Activated B cell treated with CpG ODN at 0.5 μM for 24 hours (primary cell): ENCODE measurements at regions of chr7 and their contacts with region 1.

Region 1: GRCh38 chr7:20219446-20220292 is 2.5 kb upstream of the MACC1 start:
- DNase-seq: peak; percentile 65
- ATAC-seq: peak; percentile 73
- H3K4me3 Mint-ChIP-seq: peak overlapping the region; percentile 33
- H3K27ac Mint-ChIP-seq: peak overlapping the region; percentile 95
- H3K4me1 Mint-ChIP-seq: peaks cover 73% of the 10 kb centered on the region
- H3K27me3 Mint-ChIP-seq: no peaks in the 10 kb centered on the region
- CTCF ChIP-seq: no peak

Region 2: GRCh38 chr7:19928247-19928646 is 291.4 kb before region 1 on chr7:
- CTCF ChIA-PET with region 1: no interaction called
- POLR2A ChIA-PET with region 1: no interaction called
- intact Hi-C with region 1: no loop called
- DNase-seq: no peak
- ATAC-seq: no peak
- H3K4me3 Mint-ChIP-seq: no peak overlapping the region
- H3K27ac Mint-ChIP-seq: no peak overlapping the region
- H3K4me1 Mint-ChIP-seq: no peaks in the 10 kb centered on the region
- H3K27me3 Mint-ChIP-seq: no peaks in the 10 kb centered on the region
- CTCF ChIP-seq: no peak

Region 3: GRCh38 chr7:19982841-19983835 is 236.5 kb before region 1 on chr7:
- CTCF ChIA-PET with region 1: interaction called, 4 read pairs
- POLR2A ChIA-PET with region 1: no interaction called
- intact Hi-C with region 1: loop called (anchors 1 kb)
- DNase-seq: no peak
- ATAC-seq: peak; percentile 50
- H3K4me3 Mint-ChIP-seq: no peak overlapping the region
- H3K27ac Mint-ChIP-seq: no peak overlapping the region
- H3K4me1 Mint-ChIP-seq: no peaks in the 10 kb centered on the region
- H3K27me3 Mint-ChIP-seq: no peaks in the 10 kb centered on the region
- CTCF ChIP-seq: no peak

Region 4: DNA sequence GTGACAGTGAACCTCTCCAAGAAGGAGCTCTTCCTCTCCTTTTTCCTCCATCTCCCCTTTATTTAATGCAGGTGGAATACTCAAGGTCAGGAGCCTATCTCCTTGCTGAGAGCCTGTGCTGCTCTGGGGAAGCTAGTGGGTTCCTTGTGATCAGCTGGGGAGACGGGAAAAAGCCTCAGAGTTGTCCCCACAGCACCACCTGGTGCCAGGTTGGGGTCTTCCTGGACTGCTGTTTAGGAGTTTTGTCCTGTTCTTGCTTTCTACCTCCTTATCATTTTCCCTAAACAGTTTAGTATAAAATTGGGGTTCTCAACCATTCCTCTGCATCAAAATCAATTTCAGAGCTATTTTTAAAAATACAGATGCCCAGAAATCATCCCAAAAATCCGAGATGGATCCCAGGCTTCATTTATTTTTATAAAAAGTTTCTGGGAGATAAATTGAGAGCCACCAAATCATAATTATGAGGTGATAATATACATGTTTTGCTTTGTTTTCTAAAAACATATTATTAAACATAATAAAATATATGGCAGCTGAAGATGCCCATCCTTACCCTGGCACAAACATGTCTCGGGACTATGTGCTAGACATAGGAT is 46.8 kb before region 1 on chr7:
- CTCF ChIA-PET with region 1: interaction called, 18 read pairs
- POLR2A ChIA-PET with region 1: interaction called, 4 read pairs
- intact Hi-C with region 1: no loop called
- DNase-seq: peak; percentile 27
- ATAC-seq: peak; percentile 61
- H3K4me3 Mint-ChIP-seq: no peak overlapping the region
- H3K27ac Mint-ChIP-seq: no peak overlapping the region
- H3K4me1 Mint-ChIP-seq: peaks cover 11% of the 10 kb centered on the region
- H3K27me3 Mint-ChIP-seq: no peaks in the 10 kb centered on the region
- CTCF ChIP-seq: no peak

Region 5: DNA sequence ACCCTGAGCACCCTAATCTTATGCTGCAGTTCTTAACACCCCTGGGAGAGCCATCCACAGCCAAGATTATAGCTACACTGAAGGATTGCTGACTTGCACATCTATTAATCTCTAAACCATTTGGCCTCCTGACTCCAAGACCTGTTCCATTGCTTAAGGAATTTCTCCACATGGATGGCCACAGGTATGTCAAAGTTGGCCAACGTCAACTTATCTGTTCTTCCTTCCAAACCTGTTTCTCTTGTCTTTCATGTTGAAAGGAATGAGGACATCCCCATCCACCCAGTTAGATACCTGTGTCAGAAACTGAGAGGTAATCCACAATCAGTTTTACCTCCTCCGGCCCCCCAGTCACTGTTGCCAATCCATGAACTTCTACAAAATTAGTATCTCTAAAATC is 13.1 kb before region 1 on chr7:
- CTCF ChIA-PET with region 1: interaction called, 8 read pairs
- POLR2A ChIA-PET with region 1: interaction called, 9 read pairs
- intact Hi-C with region 1: loop called (anchors 1 kb)
- DNase-seq: no peak
- ATAC-seq: no peak
- H3K4me3 Mint-ChIP-seq: no peak overlapping the region
- H3K27ac Mint-ChIP-seq: no peak overlapping the region
- H3K4me1 Mint-ChIP-seq: peaks cover 22% of the 10 kb centered on the region
- H3K27me3 Mint-ChIP-seq: no peaks in the 10 kb centered on the region
- CTCF ChIP-seq: no peak

Region 6: GRCh38 chr7:20238754-20239324 is 19.2 kb after region 1 on chr7:
- CTCF ChIA-PET with region 1: interaction called, 16 read pairs
- POLR2A ChIA-PET with region 1: interaction called, 105 read pairs
- intact Hi-C with region 1: loop called (anchors 1 kb)
- DNase-seq: peak; percentile 34
- ATAC-seq: peak; percentile 86
- H3K4me3 Mint-ChIP-seq: peak overlapping the region; percentile 73
- H3K27ac Mint-ChIP-seq: peak overlapping the region; percentile 92
- H3K4me1 Mint-ChIP-seq: peaks cover 69% of the 10 kb centered on the region
- H3K27me3 Mint-ChIP-seq: no peaks in the 10 kb centered on the region
- CTCF ChIP-seq: no peak

Region 7: GRCh38 chr7:20310963-20311742 is 91.5 kb after region 1 on chr7:
- CTCF ChIA-PET with region 1: interaction called, 7 read pairs
- POLR2A ChIA-PET with region 1: interaction called, 8 read pairs
- intact Hi-C with region 1: loop called (anchors 1 kb)
- DNase-seq: no peak
- ATAC-seq: peak; percentile 37
- H3K4me3 Mint-ChIP-seq: no peak overlapping the region
- H3K27ac Mint-ChIP-seq: peak overlapping the region; percentile 64
- H3K4me1 Mint-ChIP-seq: peaks cover 16% of the 10 kb centered on the region
- H3K27me3 Mint-ChIP-seq: no peaks in the 10 kb centered on the region
- CTCF ChIP-seq: peak; percentile 31

Region 8: GRCh38 chr7:20417260-20417659 is 197.6 kb after region 1 on chr7:
- CTCF ChIA-PET with region 1: no interaction called
- POLR2A ChIA-PET with region 1: no interaction called
- intact Hi-C with region 1: no loop called
- DNase-seq: no peak
- ATAC-seq: no peak
- H3K4me3 Mint-ChIP-seq: no peak overlapping the region
- H3K27ac Mint-ChIP-seq: no peak overlapping the region
- H3K4me1 Mint-ChIP-seq: no peaks in the 10 kb centered on the region
- H3K27me3 Mint-ChIP-seq: no peaks in the 10 kb centered on the region
- CTCF ChIP-seq: no peak

Region 9: GRCh38 chr7:20514364-20514763 is 294.7 kb after region 1 on chr7:
- CTCF ChIA-PET with region 1: no interaction called
- POLR2A ChIA-PET with region 1: no interaction called
- intact Hi-C with region 1: no loop called
- DNase-seq: no peak
- ATAC-seq: no peak
- H3K4me3 Mint-ChIP-seq: no peak overlapping the region
- H3K27ac Mint-ChIP-seq: no peak overlapping the region
- H3K4me1 Mint-ChIP-seq: no peaks in the 10 kb centered on the region
- H3K27me3 Mint-ChIP-seq: peaks cover 1% of the 10 kb centered on the region
- CTCF ChIP-seq: no peak